ENCODE measurements at regions of chr9 and their contacts with region 1.

Region 1: DNA sequence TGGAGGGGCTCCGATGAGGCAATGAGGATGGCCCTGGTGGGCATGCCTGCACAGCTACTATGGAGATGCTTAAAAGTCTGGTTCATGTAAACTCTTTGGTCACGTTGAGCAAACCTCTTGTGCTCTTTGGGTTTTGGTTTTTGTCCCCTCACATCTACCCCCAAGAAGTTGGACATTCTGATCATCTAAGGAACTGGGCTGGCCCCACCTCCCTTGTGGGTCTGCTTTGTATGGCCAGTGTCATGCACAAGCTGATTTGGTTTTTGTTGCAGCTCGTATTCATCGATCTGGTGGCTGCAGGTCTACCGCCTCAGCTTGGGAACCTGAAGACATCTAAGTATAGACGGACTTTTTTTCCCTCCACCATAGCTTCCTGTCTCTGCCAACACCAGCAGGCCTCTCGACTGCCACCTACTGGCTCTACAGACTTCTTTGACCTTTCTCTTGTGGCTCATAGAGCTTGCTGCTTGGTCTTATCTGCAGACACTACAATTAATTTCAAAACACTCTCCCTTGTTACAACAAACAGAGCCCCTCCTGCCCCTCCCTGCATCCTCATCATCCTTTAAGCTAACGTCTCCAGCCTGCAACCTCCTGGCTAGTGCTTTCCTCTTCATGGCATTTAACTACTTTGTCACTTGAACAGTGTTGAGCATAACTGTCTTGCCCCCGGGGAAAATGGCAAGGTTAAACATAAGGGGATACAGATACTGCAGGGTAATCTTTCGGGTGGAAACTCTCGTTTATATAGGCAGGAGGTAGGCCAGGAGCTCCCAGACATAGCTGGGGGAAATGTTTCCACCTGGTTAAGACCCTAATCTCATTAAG is 34.5 kb downstream of the TSTD2 start:
- DNase-seq: peak; percentile 72
- H3K4me3 Mint-ChIP-seq: no peak overlapping the region
- H3K27ac Mint-ChIP-seq: no peak overlapping the region
- H3K4me1 Mint-ChIP-seq: no peaks in the 10 kb centered on the region
- H3K27me3 Mint-ChIP-seq: peaks cover 5% of the 10 kb centered on the region
- CTCF ChIP-seq: peak; percentile 66

Region 2: GRCh38 chr9:97411789-97412625 is 186.7 kb before region 1 on chr9 and contains the start of gene TDRD7:
- CTCF ChIA-PET with region 1: interaction called, 6 read pairs
- intact Hi-C with region 1: loop called (anchors 10 kb)
- DNase-seq: peak; percentile 81
- H3K4me3 Mint-ChIP-seq: peak within 1 kb of the TSS; percentile 80
- H3K27ac Mint-ChIP-seq: peak within 1 kb of the TSS; percentile 69
- H3K4me1 Mint-ChIP-seq: peaks cover 27% of the 10 kb centered on the region
- H3K27me3 Mint-ChIP-seq: no peaks in the 10 kb centered on the region
- CTCF ChIP-seq: peak; percentile 91
- total RNA-seq, gene TDRD7: 15.5 and 21.7 TPM in 2 replicates

Region 3: GRCh38 chr9:97468658-97469448 is 129.8 kb before region 1 on chr9:
- CTCF ChIA-PET with region 1: interaction called, 20 read pairs
- intact Hi-C with region 1: loop called (anchors 5 kb)
- DNase-seq: peak; percentile 23
- H3K4me3 Mint-ChIP-seq: no peak overlapping the region
- H3K27ac Mint-ChIP-seq: no peak overlapping the region
- H3K4me1 Mint-ChIP-seq: no peaks in the 10 kb centered on the region
- H3K27me3 Mint-ChIP-seq: no peaks in the 10 kb centered on the region
- CTCF ChIP-seq: no peak

Region 4: DNA sequence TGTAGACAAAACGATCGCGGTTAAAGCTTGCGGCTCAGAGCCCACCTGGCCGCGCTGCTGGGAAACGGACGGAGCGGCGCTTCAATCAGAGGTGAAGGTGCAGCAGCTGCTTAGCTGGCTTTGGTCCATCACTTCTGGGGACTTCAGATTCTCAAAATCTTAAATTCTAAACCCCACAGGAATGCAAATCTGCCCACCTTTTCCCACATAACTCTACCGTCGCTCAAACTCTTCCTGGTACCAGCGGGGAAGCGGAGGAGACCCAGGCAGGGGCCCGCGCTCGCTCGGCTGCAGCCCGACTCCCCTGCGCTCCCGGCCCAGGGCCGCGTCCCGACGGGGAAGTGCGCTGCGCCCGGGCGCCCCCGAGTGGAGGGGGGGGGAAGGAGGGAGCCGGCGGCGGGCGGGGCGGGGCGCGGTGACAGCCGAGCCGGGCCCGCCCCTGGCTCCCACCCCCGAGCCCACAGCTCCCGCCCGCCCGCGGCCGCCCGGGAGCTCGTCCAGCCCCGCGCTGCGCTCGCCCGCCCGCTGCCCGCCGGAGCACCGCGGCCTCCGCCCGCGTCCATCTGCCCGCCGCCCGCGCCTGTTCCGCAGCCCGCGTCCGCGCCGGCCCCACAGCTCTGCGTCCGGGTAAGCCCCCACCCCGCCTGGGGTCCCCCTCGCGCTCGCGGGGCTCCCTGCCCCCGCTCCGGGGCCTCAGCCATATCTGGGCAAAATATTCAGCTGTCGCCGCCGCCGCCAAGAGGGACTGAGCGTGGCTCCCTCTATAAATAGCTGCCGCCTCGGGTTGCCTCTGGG is 97.3 kb before region 1 on chr9 and contains the start of gene TMOD1:
- CTCF ChIA-PET with region 1: interaction called, 5 read pairs
- intact Hi-C with region 1: loop called (anchors 5 kb)
- DNase-seq: peak; percentile 69
- H3K4me3 Mint-ChIP-seq: peak within 1 kb of the TSS; percentile 58
- H3K27ac Mint-ChIP-seq: no peak within 1 kb of the TSS
- H3K4me1 Mint-ChIP-seq: peaks cover 9% of the 10 kb centered on the region
- H3K27me3 Mint-ChIP-seq: no peaks in the 10 kb centered on the region
- CTCF ChIP-seq: no peak
- total RNA-seq, gene TMOD1: 0.14 and 0.15 TPM in 2 replicates

Region 5: DNA sequence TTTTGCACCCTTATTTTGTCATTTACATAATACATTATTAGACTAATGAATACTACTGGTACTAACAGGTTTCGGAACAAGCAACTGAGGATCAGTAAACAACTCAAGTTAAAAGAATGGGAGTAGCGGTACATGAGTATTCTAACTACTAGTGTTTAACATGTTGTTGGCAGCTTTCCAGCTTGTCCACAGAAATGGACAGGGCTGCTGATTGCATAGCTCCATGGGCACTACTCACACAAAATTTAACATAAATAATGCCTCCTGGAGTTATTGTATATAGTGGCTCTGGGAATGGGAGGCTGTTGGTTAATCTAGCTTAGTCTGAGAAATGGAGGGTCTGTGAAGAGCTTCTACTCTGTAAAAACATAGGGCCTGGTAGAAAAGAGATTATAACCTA is 41.6 kb after region 1 on chr9:
- CTCF ChIA-PET with region 1: no interaction called
- intact Hi-C with region 1: no loop called
- DNase-seq: no peak
- H3K4me3 Mint-ChIP-seq: no peak overlapping the region
- H3K27ac Mint-ChIP-seq: no peak overlapping the region
- H3K4me1 Mint-ChIP-seq: peaks cover 20% of the 10 kb centered on the region
- H3K27me3 Mint-ChIP-seq: no peaks in the 10 kb centered on the region
- CTCF ChIP-seq: no peak

Measured in Calu3 (cell line).